GM12878 (cell line): ENCODE measurements at regions of chr10 and their contacts with region 1.

Region 1: DNA sequence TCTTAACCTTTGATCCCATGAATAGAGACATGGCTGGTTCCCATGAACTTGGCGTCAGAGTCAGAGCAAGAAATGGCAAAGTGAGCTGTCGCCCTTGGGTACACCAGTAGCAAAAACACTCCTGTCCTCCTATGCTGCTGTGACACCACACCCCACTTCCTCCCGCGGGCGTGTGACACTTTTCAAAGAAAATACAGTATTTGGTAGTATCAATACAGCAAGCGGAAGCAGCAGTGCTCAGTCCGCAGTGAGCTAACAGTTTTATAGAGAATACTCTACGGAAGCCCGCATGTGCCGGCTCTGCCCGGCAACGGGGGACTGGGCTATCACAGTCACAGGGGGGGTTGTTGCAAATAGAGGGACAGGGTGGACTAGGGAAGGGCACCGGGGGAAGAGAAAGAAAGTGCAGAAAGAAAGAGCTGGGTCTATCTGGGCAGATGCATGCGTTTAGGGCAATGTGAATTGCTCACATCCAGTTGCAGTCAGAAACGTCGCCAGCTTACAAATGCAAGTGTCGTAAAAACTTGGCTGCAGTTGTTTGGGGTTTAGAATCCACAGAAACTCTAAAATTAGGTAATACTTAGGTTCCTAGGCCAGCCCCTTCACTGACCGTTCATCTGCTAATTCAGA is 49.8 kb downstream of the PRKCQ start:
- DNase-seq: no peak
- ATAC-seq: no peak
- H3K4me3 ChIP-seq: no peak overlapping the region
- H3K27ac ChIP-seq: no peak overlapping the region
- H3K4me1 ChIP-seq: no peaks in the 10 kb centered on the region
- H3K27me3 ChIP-seq: peaks cover 0 to 6% of the 10 kb centered on the region in 2 experiments; a peak in 1 of 4 replicates
- CTCF ChIP-seq: no peak
- EP300 ChIP-seq: no peak
- POLR2A ChIP-seq: no peak
- RAD21 ChIP-seq: no peak

Region 2: GRCh38 chr10:5479481-5480161 is 1050.7 kb before region 1 on chr10:
- CTCF ChIA-PET with region 1: no interaction called
- POLR2A ChIA-PET with region 1: no interaction called
- RAD21 ChIA-PET with region 1: no interaction called
- SMC1A ChIA-PET with region 1: no interaction called
- in situ Hi-C with region 1: no loop called
- intact Hi-C with region 1: no loop called
- DNase-seq: no peak
- ATAC-seq: no peak; the same call in none of the 3 replicates
- H3K4me3 ChIP-seq: no peak overlapping the region
- H3K27ac ChIP-seq: no peak overlapping the region
- H3K4me1 ChIP-seq: no peaks in the 10 kb centered on the region; the same call in 1 of the 2 replicates
- H3K27me3 ChIP-seq: peaks cover 4 to 9% of the 10 kb centered on the region in 2 experiments; a peak in 3 of 4 replicates
- CTCF ChIP-seq: no peak
- EP300 ChIP-seq: no peak
- POLR2A ChIP-seq: no peak
- RAD21 ChIP-seq: no peak

Region 3: DNA sequence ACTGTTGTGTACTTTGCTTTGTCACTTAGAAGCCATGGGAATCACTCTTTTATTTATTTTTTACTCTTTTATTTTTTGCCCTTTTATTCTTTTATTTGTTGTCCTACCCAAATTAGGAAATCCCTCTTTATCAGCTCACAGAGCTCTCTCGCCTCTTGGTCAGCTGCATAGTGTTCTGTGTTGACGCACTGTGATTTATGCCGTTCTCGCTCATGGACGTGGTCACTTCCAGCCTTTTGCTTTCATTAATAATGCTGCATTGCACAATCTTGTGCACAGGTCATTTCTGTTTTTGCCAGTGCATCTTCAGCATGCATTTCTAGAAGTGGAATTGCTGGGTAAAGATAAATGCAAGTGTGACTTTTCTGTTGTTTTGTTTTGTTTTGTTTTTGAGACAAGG is 598.0 kb before region 1 on chr10:
- CTCF ChIA-PET with region 1: no interaction called
- POLR2A ChIA-PET with region 1: no interaction called
- RAD21 ChIA-PET with region 1: no interaction called
- SMC1A ChIA-PET with region 1: no interaction called
- in situ Hi-C with region 1: no loop called
- intact Hi-C with region 1: no loop called
- DNase-seq: no peak
- ATAC-seq: no peak
- H3K4me3 ChIP-seq: no peak overlapping the region
- H3K27ac ChIP-seq: no peak overlapping the region
- H3K4me1 ChIP-seq: no peaks in the 10 kb centered on the region
- H3K27me3 ChIP-seq: no peaks in the 10 kb centered on the region
- CTCF ChIP-seq: no peak
- EP300 ChIP-seq: no peak
- POLR2A ChIP-seq: no peak
- RAD21 ChIP-seq: no peak

Region 4: GRCh38 chr10:6507311-6507710 is 23.0 kb before region 1 on chr10:
- CTCF ChIA-PET with region 1: no interaction called
- POLR2A ChIA-PET with region 1: interaction called, 3 read pairs
- RAD21 ChIA-PET with region 1: interaction called, 5 read pairs
- SMC1A ChIA-PET with region 1: interaction called, 14 read pairs
- in situ Hi-C with region 1: no loop called
- intact Hi-C with region 1: no loop called
- DNase-seq: peak; percentile 26
- ATAC-seq: peak; percentile 90
- H3K4me3 ChIP-seq: no peak overlapping the region
- H3K27ac ChIP-seq: no peak overlapping the region
- H3K4me1 ChIP-seq: no peaks in the 10 kb centered on the region
- H3K27me3 ChIP-seq: no peaks in the 10 kb centered on the region
- CTCF ChIP-seq: no peak
- EP300 ChIP-seq: peak; percentile 52 to 92; a peak in 3 of 4 replicates
- POLR2A ChIP-seq: no peak
- RAD21 ChIP-seq: no peak

Region 5: DNA sequence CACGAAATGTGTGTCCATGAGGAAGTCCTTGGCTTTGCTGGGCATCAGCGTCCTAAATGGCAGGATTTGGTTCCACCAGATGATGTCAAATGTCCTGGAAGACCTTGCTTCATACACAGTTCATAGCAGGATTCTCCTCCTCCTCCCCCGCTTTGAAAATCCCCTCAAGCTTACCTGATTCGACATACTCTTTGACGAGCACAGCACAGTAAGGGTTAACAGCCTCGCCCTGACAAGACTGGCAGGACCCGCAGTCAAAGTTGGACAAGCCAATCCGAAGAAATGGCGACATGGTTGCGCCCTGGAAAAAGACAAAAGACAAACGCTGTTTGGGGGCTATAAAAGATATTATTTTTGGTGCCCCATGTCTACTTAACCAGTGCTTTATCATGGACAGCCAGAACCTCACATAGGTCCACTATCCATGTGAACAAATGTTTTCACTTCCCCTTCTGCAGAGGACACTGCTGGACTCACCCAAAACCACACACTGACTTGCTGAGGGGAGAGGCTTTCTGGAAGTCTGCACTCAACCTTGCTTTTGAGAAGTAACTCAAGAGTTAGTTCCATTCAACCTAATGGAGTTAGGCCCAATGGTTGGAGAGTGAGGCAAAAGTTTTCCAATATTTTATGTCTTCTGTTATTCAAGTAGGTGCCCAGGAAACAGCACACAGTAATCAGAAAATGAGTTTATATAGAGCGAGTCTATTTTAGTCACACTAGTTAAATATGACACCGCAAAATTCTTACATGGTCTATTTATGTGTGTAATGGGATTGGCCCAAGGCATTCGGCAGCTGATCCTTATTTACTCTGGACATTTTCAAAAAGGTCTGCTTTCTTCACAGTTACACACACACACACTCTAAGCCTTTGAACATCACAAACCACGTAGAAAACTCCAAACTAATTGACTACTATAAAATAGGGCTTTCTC is 15.2 kb before region 1 on chr10:
- CTCF ChIA-PET with region 1: interaction called, 3 read pairs
- POLR2A ChIA-PET with region 1: interaction called, 5 read pairs
- RAD21 ChIA-PET with region 1: interaction called, 5 read pairs
- SMC1A ChIA-PET with region 1: interaction called, 10 read pairs
- in situ Hi-C with region 1: no loop called
- intact Hi-C with region 1: no loop called
- DNase-seq: no peak
- ATAC-seq: peak; percentile 43; the same call in 1 of the 3 replicates
- H3K4me3 ChIP-seq: no peak overlapping the region
- H3K27ac ChIP-seq: no peak overlapping the region
- H3K4me1 ChIP-seq: no peaks in the 10 kb centered on the region
- H3K27me3 ChIP-seq: peaks cover 0 to 8% of the 10 kb centered on the region in 2 experiments; a peak in 1 of 4 replicates
- CTCF ChIP-seq: no peak
- EP300 ChIP-seq: no peak
- POLR2A ChIP-seq: no peak
- RAD21 ChIP-seq: no peak